CD4-positive, alpha-beta T cell (primary cell): ENCODE measurements at regions of chr6 and their contacts with region 1.

Region 1: DNA sequence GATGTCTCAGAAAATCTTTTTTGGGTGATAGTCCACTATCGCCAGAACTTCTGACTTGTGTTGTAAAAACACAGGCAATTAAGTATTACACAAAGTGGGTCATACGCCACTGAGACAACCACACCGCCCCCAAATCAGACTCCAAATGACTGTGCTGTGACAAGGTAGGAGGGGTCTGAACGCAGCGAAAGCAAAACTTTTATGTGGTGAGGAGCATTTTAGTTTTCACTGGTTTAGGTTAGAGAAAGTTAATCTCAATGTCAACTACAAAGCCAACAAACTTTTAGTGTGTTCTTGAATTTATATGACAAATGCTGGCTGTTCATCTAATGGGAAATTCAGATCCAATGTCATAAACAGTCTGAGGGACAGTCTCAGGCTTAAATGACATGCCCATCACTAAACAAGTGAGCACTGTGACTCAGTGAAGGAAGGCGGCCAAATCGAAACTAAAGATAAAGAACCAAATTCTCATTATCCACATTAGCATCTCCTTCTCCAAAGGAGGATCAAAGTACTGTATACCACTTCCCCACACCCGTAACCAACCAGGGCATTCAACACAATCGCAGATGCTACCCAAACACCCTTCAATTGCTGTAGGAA is 186.7 kb downstream of the GJA10 start:
- DNase-seq: peak; percentile 31 to 85 (median 54)
- ATAC-seq: peak; percentile 80
- H3K4me3 ChIP-seq: peak overlapping the region; percentile 52
- H3K4me3 Mint-ChIP-seq: peak overlapping the region; percentile 93
- H3K27ac ChIP-seq: peak overlapping the region; percentile 57 to 68
- H3K27ac Mint-ChIP-seq: peak overlapping the region; percentile 92
- H3K4me1 ChIP-seq: peaks cover 35% of the 10 kb centered on the region
- H3K4me1 Mint-ChIP-seq: peaks cover 98% of the 10 kb centered on the region
- H3K27me3 ChIP-seq: no peaks in the 10 kb centered on the region
- H3K27me3 Mint-ChIP-seq: no peaks in the 10 kb centered on the region
- CTCF ChIP-seq: no peak

Region 2: DNA sequence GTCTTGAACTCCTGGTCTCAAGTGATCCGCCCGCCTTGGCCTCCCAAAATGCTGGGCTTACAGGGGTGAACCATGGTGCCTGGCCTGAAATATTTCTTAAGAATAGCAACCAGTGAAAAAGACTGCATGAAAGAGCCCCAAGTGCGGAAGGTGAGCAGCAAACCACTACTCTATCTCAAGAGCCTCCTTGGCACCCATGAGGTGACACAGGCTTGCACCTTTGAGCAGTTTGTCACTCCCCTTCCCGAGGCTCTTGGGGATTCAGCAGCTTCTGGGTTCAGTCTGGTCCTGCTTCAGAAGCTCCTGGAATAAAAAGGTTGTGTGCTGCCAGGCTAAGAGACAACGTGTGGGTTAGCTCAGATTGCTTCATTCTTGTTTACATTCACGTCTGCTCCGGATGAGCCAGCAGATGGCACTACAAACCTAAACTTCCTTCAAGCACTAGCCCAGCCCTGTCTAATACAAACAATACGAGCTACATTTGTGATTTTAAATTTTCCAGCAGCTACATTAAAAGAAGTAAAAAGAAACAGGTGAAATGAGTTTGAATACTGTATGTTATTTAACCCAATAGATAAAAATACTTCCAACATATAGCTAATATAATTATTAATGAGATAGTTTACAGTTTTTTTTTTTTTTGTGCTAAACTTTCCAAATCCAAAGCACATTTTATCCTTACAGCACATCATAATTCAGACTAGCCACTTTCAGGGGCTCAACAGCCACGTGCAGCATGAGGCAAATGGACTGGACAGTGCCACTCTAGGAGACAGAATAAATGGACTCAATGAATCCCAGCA is 140.6 kb before region 1 on chr6:
- CTCF ChIA-PET with region 1: interaction called, 6 read pairs
- POLR2A ChIA-PET with region 1: no interaction called
- intact Hi-C with region 1: loop called in 1 of 2 experiments (anchors 2 kb)
- DNase-seq: peak; percentile 47 to 87 (median 65)
- ATAC-seq: peak; percentile 95
- H3K4me3 ChIP-seq: no peak overlapping the region
- H3K4me3 Mint-ChIP-seq: no peak overlapping the region
- H3K27ac ChIP-seq: no peak overlapping the region
- H3K27ac Mint-ChIP-seq: peak overlapping the region; percentile 67
- H3K4me1 ChIP-seq: peaks cover 8% of the 10 kb centered on the region
- H3K4me1 Mint-ChIP-seq: peaks cover 41% of the 10 kb centered on the region
- H3K27me3 ChIP-seq: no peaks in the 10 kb centered on the region
- H3K27me3 Mint-ChIP-seq: no peaks in the 10 kb centered on the region
- CTCF ChIP-seq: peak; percentile 89

Region 3: DNA sequence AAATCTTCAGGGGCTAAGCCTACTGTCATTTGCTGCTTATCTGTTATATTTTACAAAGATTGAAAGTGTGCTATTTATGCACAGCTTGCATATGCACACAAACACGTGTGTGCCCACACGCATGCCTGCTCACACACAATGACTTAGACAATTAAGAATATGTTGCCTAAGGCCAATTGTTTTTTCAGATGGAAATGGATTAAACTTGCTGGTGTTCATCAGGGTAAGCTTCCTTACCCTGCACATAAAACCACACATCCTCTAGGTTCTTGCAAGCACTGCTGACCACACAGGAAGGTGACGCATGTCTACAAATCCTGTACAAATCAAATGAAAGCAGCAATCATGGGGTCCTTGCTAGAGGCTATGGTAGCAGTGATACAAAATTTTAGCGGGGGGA is 128.3 kb before region 1 on chr6:
- CTCF ChIA-PET with region 1: no interaction called
- POLR2A ChIA-PET with region 1: interaction called, 4 read pairs
- intact Hi-C with region 1: loop called in 1 of 2 experiments (anchors 2 kb)
- DNase-seq: peak; percentile 22 to 90 (median 48)
- ATAC-seq: peak; percentile 94
- H3K4me3 ChIP-seq: no peak overlapping the region
- H3K4me3 Mint-ChIP-seq: peak overlapping the region; percentile 67
- H3K27ac ChIP-seq: peak overlapping the region; percentile 48 to 49
- H3K27ac Mint-ChIP-seq: peak overlapping the region; percentile 92
- H3K4me1 ChIP-seq: peaks cover 55% of the 10 kb centered on the region
- H3K4me1 Mint-ChIP-seq: peaks cover 74% of the 10 kb centered on the region
- H3K27me3 ChIP-seq: no peaks in the 10 kb centered on the region
- H3K27me3 Mint-ChIP-seq: no peaks in the 10 kb centered on the region
- CTCF ChIP-seq: no peak

Region 4: DNA sequence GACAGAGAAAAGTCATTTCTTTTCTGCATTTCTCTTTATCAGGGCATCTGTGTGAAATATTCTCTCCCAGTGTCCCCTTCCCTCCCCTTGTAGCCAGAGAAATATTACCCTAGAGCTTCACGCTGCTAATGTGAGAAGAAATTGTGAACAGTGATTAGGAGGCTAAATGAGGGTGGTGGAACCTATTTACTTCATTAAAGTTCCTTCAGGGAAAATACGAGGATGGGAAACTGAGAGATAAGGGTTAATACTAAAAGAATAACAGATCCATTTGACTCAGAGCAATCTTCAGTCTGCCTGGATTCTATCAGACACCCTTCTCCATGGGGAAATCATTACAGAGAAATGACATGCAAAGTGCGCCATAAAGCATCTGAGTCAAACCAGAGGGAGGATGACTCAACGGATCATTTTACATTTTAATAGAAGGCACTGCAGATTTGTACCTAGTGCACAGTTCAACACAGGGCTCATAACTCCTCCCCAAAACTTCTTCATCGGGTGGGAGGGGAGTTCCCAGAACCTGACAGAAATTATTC is 55.4 kb before region 1 on chr6:
- CTCF ChIA-PET with region 1: no interaction called
- POLR2A ChIA-PET with region 1: no interaction called
- intact Hi-C with region 1: loop called in 1 of 2 experiments (anchors 10 kb)
- DNase-seq: peak in 1 of 14 experiments; percentile 23
- ATAC-seq: peak; percentile 69
- H3K4me3 ChIP-seq: no peak overlapping the region
- H3K4me3 Mint-ChIP-seq: no peak overlapping the region
- H3K27ac ChIP-seq: no peak overlapping the region
- H3K27ac Mint-ChIP-seq: peak overlapping the region; percentile 45
- H3K4me1 ChIP-seq: peaks cover 20% of the 10 kb centered on the region
- H3K4me1 Mint-ChIP-seq: peaks cover 85% of the 10 kb centered on the region
- H3K27me3 ChIP-seq: no peaks in the 10 kb centered on the region
- H3K27me3 Mint-ChIP-seq: no peaks in the 10 kb centered on the region
- CTCF ChIP-seq: no peak

Region 5: GRCh38 chr6:90098001-90098531 is 17.1 kb after region 1 on chr6:
- CTCF ChIA-PET with region 1: interaction called, 4 read pairs
- POLR2A ChIA-PET with region 1: interaction called, 15 read pairs
- intact Hi-C with region 1: loop called in 1 of 2 experiments (anchors 2 kb)
- DNase-seq: peak in 5 of 14 experiments; percentile 17 to 51 (median 43)
- ATAC-seq: peak; percentile 77
- H3K4me3 ChIP-seq: no peak overlapping the region
- H3K4me3 Mint-ChIP-seq: peak overlapping the region; percentile 7
- H3K27ac ChIP-seq: no peak overlapping the region
- H3K27ac Mint-ChIP-seq: peak overlapping the region; percentile 82
- H3K4me1 ChIP-seq: peaks cover 34% of the 10 kb centered on the region
- H3K4me1 Mint-ChIP-seq: peaks cover 94% of the 10 kb centered on the region
- H3K27me3 ChIP-seq: no peaks in the 10 kb centered on the region
- H3K27me3 Mint-ChIP-seq: no peaks in the 10 kb centered on the region
- CTCF ChIP-seq: peak; percentile 3

Region 6: DNA sequence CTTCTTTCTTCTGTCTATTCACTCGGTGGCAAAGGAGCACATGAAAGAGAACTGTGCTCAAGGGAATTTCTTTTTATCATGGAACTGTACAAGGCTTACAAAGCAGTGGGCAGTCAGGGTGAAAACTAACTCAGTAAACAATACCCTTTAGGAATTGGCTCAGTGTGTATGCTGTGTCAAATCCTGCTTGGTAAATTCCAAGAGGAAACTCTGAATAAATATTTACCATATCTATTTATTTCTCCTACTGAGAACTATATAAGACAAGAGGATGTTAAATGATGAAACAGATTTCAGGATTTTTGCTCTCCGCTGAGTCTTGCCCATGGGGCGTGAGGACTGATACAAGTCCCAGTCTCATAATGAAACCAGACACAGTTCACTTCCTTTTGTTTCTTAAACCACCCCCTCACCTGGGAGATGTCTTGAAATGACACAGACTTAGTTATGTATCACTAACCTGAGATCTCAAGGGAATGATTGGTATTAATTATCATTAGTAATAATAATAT is 26.8 kb after region 1 on chr6:
- CTCF ChIA-PET with region 1: no interaction called
- POLR2A ChIA-PET with region 1: interaction called, 11 read pairs
- intact Hi-C with region 1: loop called in 1 of 2 experiments (anchors 1 kb)
- DNase-seq: peak in 4 of 14 experiments; percentile 36 to 43 (median 40)
- ATAC-seq: peak; percentile 60
- H3K4me3 ChIP-seq: no peak overlapping the region
- H3K4me3 Mint-ChIP-seq: peak overlapping the region; percentile 27
- H3K27ac ChIP-seq: no peak overlapping the region
- H3K27ac Mint-ChIP-seq: peak overlapping the region; percentile 70
- H3K4me1 ChIP-seq: peaks cover 54% of the 10 kb centered on the region
- H3K4me1 Mint-ChIP-seq: peaks cover 93% of the 10 kb centered on the region
- H3K27me3 ChIP-seq: no peaks in the 10 kb centered on the region
- H3K27me3 Mint-ChIP-seq: no peaks in the 10 kb centered on the region
- CTCF ChIP-seq: no peak

Region 7: GRCh38 chr6:90173262-90173925 is 92.4 kb after region 1 on chr6:
- CTCF ChIA-PET with region 1: no interaction called
- POLR2A ChIA-PET with region 1: no interaction called
- intact Hi-C with region 1: loop called in 1 of 2 experiments (anchors 2 kb)
- DNase-seq: peak in 2 of 14 experiments; percentile 41 to 47
- ATAC-seq: peak; percentile 51
- H3K4me3 ChIP-seq: no peak overlapping the region
- H3K4me3 Mint-ChIP-seq: peak overlapping the region; percentile 53
- H3K27ac ChIP-seq: no peak overlapping the region
- H3K27ac Mint-ChIP-seq: peak overlapping the region; percentile 82
- H3K4me1 ChIP-seq: peaks cover 27% of the 10 kb centered on the region
- H3K4me1 Mint-ChIP-seq: peaks cover 81% of the 10 kb centered on the region
- H3K27me3 ChIP-seq: no peaks in the 10 kb centered on the region
- H3K27me3 Mint-ChIP-seq: no peaks in the 10 kb centered on the region
- CTCF ChIP-seq: no peak